ENCODE measurements at regions of chr9 and their contacts with region 1.

Region 1: GRCh38 chr9:121929893-121930875 is 162.9 kb downstream of the TTLL11 start:
- DNase-seq: no peak
- H3K4me3 ChIP-seq: no peak overlapping the region
- H3K27ac ChIP-seq: no peak overlapping the region
- H3K4me1 ChIP-seq: peaks cover 0 to 6% (median 2%) of the 10 kb centered on the region in 4 donors
- H3K27me3 ChIP-seq: no peaks in the 10 kb centered on the region
- CTCF ChIP-seq: peak in 1 of 2 experiments; percentile 4

Region 2: DNA sequence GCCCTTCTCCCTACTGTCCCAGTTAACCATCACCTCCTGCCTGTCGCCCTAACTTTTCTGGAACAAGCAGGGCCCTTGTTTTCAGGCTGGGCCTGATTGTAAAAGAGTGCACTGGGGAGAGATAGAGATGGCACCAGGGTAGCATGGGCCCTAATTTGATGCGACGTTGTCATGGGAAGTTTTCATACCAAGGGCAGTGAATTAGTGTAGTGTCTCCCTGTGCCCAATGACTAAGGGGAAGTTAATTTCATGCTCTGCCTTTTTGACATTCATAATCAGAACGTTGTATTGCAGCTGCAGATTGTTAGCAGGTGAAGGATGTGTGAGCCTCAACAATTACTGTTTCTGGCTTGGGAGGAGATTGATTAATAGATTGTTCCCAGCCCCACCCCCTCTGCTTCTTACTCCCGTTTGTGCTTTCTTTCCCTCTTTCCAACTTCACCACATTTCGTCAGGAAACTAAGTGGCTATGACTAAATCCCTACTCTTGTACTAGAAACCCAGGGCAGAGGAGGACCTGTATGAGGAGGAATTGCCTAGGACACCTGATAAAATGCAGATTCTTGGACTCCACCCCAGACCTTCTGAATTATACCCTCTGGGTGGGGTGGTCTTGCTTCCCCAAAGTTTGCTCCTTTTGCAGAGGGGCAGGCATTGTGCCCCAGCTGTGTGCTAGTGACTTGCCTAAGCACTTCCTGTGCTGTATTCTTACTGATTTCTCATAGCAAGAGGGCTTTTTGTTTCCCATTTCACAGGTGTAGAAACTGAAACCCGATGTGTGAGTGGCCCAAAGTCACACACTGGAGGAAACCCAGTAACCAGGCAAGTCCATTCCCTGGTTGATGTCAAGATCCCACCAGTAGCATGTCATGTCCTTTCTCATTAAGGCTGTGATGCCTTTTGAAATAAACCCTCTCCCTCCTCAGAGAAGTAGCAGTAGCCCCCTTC is 222.4 kb before region 1 on chr9:
- intact Hi-C with region 1: no loop called
- DNase-seq: no peak
- H3K4me3 ChIP-seq: no peak overlapping the region
- H3K27ac ChIP-seq: no peak overlapping the region
- H3K4me1 ChIP-seq: peaks cover 0 to 20% (median 11%) of the 10 kb centered on the region in 4 donors
- H3K27me3 ChIP-seq: no peaks in the 10 kb centered on the region
- CTCF ChIP-seq: no peak

Region 3: DNA sequence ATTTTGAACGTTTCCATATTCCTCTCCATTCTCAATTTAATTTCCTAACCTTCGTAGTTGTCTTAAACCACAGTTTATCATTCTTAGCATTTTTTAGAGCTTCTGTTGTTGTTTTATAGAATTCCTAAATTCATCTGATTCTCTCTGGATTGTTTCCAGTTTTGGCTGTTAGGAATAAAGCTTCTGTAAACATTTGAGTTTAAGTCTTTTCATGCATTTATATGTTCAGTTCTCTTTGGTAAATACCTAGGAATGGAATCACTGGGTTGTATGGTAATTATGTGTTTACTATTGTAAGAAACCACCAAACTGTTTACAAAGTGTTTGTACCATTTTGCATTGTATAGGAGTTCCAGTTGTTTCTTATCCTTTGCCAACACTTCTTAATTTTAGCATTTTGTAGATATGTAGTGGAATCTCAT is 1133.0 kb after region 1 on chr9:
- intact Hi-C with region 1: loop called (anchors 5 kb)
- DNase-seq: no peak
- H3K4me3 ChIP-seq: no peak overlapping the region
- H3K27ac ChIP-seq: peak overlapping the region; percentile 72 to 82
- H3K4me1 ChIP-seq: peaks cover 0 to 98% (median 26%) of the 10 kb centered on the region in 4 donors
- H3K27me3 ChIP-seq: no peaks in the 10 kb centered on the region
- CTCF ChIP-seq: no peak

Region 4: GRCh38 chr9:123615381-123615780 is 1685.2 kb after region 1 on chr9:
- intact Hi-C with region 1: no loop called
- DNase-seq: no peak
- H3K4me3 ChIP-seq: no peak overlapping the region
- H3K27ac ChIP-seq: no peak overlapping the region
- H3K4me1 ChIP-seq: no peaks in the 10 kb centered on the region
- H3K27me3 ChIP-seq: no peaks in the 10 kb centered on the region
- CTCF ChIP-seq: no peak